Posterior vena cava (tissue), 2 donors: ENCODE measurements at regions of chr16 and their contacts with region 1.

Region 1: GRCh38 chr16:6300523-6300922 is 1032.1 kb upstream of the RBFOX1 start:
- DNase-seq: no peak

Region 2: DNA sequence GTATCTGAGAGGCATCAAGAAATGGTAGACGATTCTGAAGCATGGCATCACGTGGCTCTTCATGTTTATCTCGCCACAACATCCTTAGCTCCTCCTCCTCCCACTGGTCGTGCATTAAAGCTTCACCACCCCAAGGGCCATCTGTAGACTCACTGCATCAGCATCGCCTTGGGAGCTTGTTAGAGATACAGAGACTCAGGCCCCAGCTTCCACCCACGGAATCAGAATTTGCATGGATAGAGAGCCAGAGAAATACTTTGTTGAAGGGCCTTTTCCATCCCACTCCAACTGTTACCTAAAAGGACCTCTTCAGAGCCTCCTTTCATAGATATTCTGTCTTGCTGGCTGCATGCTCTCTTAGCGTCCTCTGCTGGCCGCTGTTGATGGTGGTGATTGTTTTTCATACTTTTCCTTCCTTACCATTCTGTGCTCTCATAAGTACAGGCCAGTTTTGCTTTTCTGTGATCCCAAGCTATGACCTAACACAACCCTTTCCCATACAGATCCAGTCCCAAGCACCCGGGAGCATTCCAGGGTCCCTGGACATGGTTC is 153.6 kb before region 1 on chr16:
- intact Hi-C with region 1: loop called in 1 of 2 experiments (anchors 5 kb)
- DNase-seq: no peak

Region 3: GRCh38 chr16:6349725-6350124 is 49.2 kb after region 1 on chr16:
- intact Hi-C with region 1: no loop called
- DNase-seq: no peak